ENCODE measurements at regions of chr16 and their contacts with region 1.

Region 1: DNA sequence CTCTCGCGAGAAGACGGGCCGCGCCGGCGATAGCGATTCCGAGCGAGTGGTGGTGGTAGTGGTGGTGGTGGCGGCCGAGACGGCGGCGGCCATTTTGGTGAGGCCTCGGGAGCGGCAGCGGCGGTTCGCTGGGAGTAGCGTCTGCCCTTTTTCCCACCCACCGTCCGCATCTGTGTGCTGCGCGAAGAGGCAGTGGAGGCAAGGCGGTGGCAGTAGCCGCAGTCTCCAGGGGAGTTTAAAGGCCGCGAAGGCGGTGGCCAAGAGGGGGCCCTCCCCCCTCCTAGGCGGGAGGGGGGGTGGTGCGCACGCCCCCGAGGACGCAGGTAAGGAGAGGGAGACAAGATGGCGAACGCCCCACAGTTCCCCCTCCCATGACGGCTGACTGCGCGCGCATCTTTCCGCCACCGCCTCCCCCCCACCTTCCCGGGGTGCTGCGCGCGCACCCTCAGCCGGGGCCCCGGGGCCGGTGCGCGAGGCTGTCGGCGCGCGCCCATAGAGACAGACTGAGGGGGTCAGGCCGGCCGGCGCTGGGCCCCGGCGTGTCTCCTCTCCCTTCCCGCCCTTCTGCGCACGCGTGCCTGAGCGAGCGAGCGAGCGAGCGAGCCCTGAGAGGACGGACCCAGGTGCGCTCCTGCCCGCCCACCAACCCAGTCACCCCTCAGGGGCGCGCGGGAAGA is 694 bp upstream of the SRCAP start:
- DNase-seq: peak; percentile 97 to 99
- ATAC-seq: peak; percentile 80 to 83
- H3K4me3 ChIP-seq: peak overlapping the region; percentile 90
- H3K27ac ChIP-seq: peak overlapping the region; percentile 97 to 99
- H3K4me1 ChIP-seq: peaks cover 15% of the 10 kb centered on the region
- CTCF ChIP-seq: no peak
- EP300 ChIP-seq: no peak
- POLR2A ChIP-seq: peak; percentile 67
- RAD21 ChIP-seq: no peak

Region 2: GRCh38 chr16:30657866-30658730 is 40.2 kb before region 1 on chr16 and contains the start of gene FBRS:
- CTCF ChIA-PET with region 1: interaction called, 39 read pairs
- POLR2A ChIA-PET with region 1: interaction called, 14 read pairs
- DNase-seq: peak; percentile 97 to 100
- ATAC-seq: peak; percentile 83 to 90
- H3K4me3 ChIP-seq: peak within 1 kb of the TSS; percentile 90
- H3K27ac ChIP-seq: peak within 1 kb of the TSS; percentile 87 to 99
- H3K4me1 ChIP-seq: peaks cover 23% of the 10 kb centered on the region
- CTCF ChIP-seq: peak; percentile 88
- EP300 ChIP-seq: no peak
- POLR2A ChIP-seq: peak; percentile 83
- RAD21 ChIP-seq: peak; percentile 51 to 80
- polyA plus RNA-seq, gene FBRS: 5.9 and 8.1 TPM in 2 replicates